Mammary epithelial cell (primary cell): ENCODE measurements at regions of chr1 and their contacts with region 1.

Region 1: GRCh38 chr1:12658531-12659453 is 14.9 kb downstream of the AADACL4 start:
- DNase-seq: peak; percentile 67
- H3K4me3 ChIP-seq: no peak overlapping the region
- H3K27ac ChIP-seq: no peak overlapping the region
- H3K4me1 ChIP-seq: no peaks in the 10 kb centered on the region
- H3K27me3 ChIP-seq: no peaks in the 10 kb centered on the region
- CTCF ChIP-seq: peak; percentile 95 to 96

Region 2: DNA sequence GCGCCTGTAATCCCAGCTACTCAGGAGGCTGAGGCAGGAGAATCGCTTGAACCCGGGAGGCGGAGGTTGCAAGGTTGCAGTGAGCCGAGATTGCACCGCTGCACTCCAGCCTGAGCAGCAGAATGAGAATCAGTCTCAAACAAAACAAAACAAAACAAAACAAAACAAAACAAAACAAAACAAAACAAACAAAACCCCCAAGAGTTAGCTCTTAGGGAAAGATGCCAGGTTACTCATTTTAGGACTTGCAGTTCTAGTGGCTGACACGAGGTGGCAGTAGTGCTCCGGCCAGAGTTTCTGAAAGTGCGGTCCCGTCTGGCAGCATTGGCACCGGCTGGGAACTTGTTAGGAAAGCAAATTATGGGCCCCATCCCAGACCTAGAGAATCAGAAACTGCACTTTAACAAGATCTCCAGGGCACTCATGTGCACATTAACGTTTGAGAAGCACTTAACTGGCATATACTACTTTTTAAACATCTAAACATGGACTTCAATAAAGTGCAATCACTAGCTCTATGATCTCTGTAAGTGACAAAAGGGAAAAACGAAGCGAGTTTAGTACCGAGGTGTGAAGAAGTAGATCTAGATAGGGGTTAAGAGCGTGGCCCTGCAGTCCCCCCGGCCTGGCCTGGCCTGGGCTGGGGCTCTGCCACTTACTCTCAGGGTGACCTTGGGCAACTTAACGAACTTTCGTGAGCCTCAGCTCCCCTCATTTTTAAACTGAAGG is 533.9 kb before region 1 on chr1:
- CTCF ChIA-PET with region 1: no interaction called
- dilution Hi-C with region 1: no loop called
- in situ Hi-C with region 1: no loop called
- intact Hi-C with region 1: loop called (anchors 2 kb)
- DNase-seq: peak; percentile 41
- H3K4me3 ChIP-seq: no peak overlapping the region
- H3K27ac ChIP-seq: no peak overlapping the region
- H3K4me1 ChIP-seq: no peaks in the 10 kb centered on the region
- H3K27me3 ChIP-seq: peaks cover 3% of the 10 kb centered on the region
- CTCF ChIP-seq: peak; percentile 94 to 95

Region 3: DNA sequence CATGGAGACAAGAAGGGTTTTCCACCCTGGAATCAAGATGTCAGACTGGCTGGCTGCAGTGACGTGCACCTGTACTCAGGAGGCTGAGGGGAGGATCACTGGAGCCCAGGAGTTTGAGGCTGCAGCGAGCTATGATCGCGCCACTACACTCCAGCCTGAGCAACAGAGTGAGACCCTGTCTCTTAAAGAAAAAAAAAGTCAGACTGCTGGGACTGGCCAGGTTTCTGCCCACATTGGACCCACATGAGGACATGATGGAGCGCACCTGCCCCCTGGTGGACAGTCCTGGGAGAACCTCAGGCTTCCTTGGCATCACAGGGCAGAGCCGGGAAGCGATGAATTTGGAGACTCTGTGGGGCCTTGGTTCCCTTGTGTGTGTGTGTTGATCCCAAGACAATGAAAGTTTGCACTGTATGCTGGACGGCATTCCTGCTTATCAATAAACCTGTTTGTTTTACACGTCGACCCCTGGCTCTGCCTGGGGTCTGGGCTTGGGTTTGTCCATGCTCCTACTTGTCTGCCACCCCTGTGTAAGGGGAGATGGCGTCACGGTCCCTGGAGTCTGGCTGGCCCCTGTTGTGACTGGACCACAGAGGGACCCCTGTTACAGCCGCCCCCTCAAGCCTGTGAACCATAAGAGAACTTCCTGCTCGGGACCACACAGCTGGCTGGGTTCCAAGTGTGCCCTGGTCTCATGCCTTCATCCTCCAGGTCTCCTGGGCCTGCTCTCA is 449.9 kb before region 1 on chr1:
- CTCF ChIA-PET with region 1: no interaction called
- dilution Hi-C with region 1: no loop called
- in situ Hi-C with region 1: no loop called
- intact Hi-C with region 1: loop called (anchors 2 kb)
- DNase-seq: peak; percentile 57
- H3K4me3 ChIP-seq: no peak overlapping the region
- H3K27ac ChIP-seq: no peak overlapping the region
- H3K4me1 ChIP-seq: peaks cover 8% of the 10 kb centered on the region
- H3K27me3 ChIP-seq: no peaks in the 10 kb centered on the region
- CTCF ChIP-seq: peak; percentile 90 to 93

Region 4: GRCh38 chr1:12275369-12275768 is 383.4 kb before region 1 on chr1:
- CTCF ChIA-PET with region 1: no interaction called
- dilution Hi-C with region 1: no loop called
- in situ Hi-C with region 1: no loop called
- intact Hi-C with region 1: loop called (anchors 1 kb)
- DNase-seq: no peak
- H3K4me3 ChIP-seq: no peak overlapping the region
- H3K27ac ChIP-seq: no peak overlapping the region
- H3K4me1 ChIP-seq: no peaks in the 10 kb centered on the region
- H3K27me3 ChIP-seq: no peaks in the 10 kb centered on the region
- CTCF ChIP-seq: peak; percentile 66 to 71

Region 5: GRCh38 chr1:12314333-12314903 is 344.4 kb before region 1 on chr1:
- CTCF ChIA-PET with region 1: no interaction called
- dilution Hi-C with region 1: no loop called
- in situ Hi-C with region 1: no loop called
- intact Hi-C with region 1: loop called (anchors 1 kb)
- DNase-seq: no peak
- H3K4me3 ChIP-seq: no peak overlapping the region
- H3K27ac ChIP-seq: no peak overlapping the region
- H3K4me1 ChIP-seq: no peaks in the 10 kb centered on the region
- H3K27me3 ChIP-seq: no peaks in the 10 kb centered on the region
- CTCF ChIP-seq: peak; percentile 21 to 31

Region 6: GRCh38 chr1:12407050-12407961 is 251.5 kb before region 1 on chr1:
- CTCF ChIA-PET with region 1: no interaction called
- dilution Hi-C with region 1: no loop called
- in situ Hi-C with region 1: no loop called
- intact Hi-C with region 1: loop called (anchors 1 kb)
- DNase-seq: peak; percentile 52
- H3K4me3 ChIP-seq: no peak overlapping the region
- H3K27ac ChIP-seq: no peak overlapping the region
- H3K4me1 ChIP-seq: no peaks in the 10 kb centered on the region
- H3K27me3 ChIP-seq: no peaks in the 10 kb centered on the region
- CTCF ChIP-seq: peak; percentile 37 to 49